Dendritic cell treated with granulocyte-macrophage colony-stimulating factor and Interleukin-4, amounts not matched to agents 40 ng/mL and 50 ng/mL, for 4 days (primary cell): ENCODE measurements at regions of chr6 and their contacts with region 1.

Region 1: GRCh38 chr6:16761471-16762267 is 409 bp upstream of the ATXN1 start:
- H3K4me3 Mint-ChIP-seq: peak overlapping the region; percentile 92
- H3K27ac Mint-ChIP-seq: peak overlapping the region; percentile 99
- H3K4me1 Mint-ChIP-seq: peaks cover 24% of the 10 kb centered on the region
- H3K27me3 Mint-ChIP-seq: no peaks in the 10 kb centered on the region

Region 2: DNA sequence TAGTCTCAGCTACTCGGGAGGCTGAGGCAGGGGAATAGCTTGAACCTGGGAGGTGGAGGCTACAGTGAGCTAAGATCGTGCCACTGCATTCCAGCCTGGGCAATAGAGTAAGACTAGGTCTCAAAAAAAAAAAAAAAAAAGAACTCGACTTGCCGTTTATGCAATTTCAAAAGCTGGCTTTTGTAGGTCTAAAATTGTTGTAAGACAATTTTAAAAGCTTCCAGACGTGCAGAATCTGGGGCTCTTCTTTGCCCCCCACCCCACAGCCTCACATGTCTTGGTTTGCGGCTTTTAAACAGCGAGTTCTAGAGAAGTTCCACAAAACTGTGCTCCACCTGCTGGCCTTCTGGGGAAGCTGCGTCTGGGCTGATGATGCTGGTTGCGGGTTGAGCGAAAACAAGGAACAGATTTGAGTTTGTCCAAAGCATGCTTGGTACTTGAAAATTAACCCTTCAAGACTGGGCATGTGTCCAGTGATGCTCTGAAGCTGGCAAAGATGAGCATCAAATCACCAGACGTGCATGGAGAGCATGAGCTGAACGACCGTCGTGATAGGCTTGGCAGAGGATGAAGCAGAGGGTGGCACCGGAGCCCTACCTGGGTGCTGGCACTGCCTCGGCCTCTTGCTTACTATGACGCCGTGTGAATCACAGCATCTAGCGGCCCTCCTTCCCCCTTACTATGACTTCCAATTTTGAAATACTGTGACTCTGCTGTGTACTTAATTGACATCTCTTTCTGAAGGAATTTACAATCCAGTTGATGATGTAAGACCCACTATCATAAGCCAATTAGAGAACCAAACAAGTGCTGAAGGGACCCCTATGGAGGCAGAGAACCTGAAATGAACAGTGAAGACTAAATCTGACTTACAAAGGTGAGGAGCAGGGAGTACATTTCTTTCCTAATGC is 351.9 kb before region 1 on chr6:
- intact Hi-C with region 1: loop called (anchors 5 kb)
- H3K4me3 Mint-ChIP-seq: no peak overlapping the region
- H3K27ac Mint-ChIP-seq: peak overlapping the region; percentile 41
- H3K4me1 Mint-ChIP-seq: peaks cover 62% of the 10 kb centered on the region
- H3K27me3 Mint-ChIP-seq: no peaks in the 10 kb centered on the region

Region 3: DNA sequence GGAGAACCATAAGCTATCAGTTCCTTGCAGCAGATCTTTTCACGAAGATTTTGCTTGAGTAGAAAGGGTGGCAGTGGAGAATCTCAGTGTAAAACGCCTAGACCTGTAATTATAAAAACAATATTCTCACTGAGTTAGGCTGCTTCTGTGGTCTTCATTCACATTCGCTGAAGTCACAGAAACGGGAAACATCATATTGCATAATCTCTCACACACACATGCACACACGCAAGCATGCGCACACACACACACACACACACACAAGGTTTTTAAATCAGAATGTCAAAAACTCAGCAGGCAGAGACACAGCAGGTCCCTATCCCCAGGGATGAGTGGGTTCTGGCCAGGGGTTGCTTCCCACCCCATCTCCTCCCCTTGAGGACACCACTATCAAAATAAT is 175.9 kb before region 1 on chr6:
- intact Hi-C with region 1: loop called (anchors 5 kb)
- H3K4me3 Mint-ChIP-seq: peak overlapping the region; percentile 62
- H3K27ac Mint-ChIP-seq: peak overlapping the region; percentile 71
- H3K4me1 Mint-ChIP-seq: peaks cover 41% of the 10 kb centered on the region
- H3K27me3 Mint-ChIP-seq: no peaks in the 10 kb centered on the region

Region 4: GRCh38 chr6:16824845-16825685 is 63.4 kb after region 1 on chr6:
- intact Hi-C with region 1: loop called (anchors 2 kb)
- H3K4me3 Mint-ChIP-seq: peak overlapping the region; percentile 32
- H3K27ac Mint-ChIP-seq: peak overlapping the region; percentile 99
- H3K4me1 Mint-ChIP-seq: peaks cover 58% of the 10 kb centered on the region
- H3K27me3 Mint-ChIP-seq: peaks cover 3% of the 10 kb centered on the region

Region 5: GRCh38 chr6:16849280-16849987 is 87.8 kb after region 1 on chr6:
- intact Hi-C with region 1: no loop called
- H3K4me3 Mint-ChIP-seq: no peak overlapping the region
- H3K27ac Mint-ChIP-seq: peak overlapping the region; percentile 94
- H3K4me1 Mint-ChIP-seq: peaks cover 62% of the 10 kb centered on the region
- H3K27me3 Mint-ChIP-seq: no peaks in the 10 kb centered on the region

Region 6: DNA sequence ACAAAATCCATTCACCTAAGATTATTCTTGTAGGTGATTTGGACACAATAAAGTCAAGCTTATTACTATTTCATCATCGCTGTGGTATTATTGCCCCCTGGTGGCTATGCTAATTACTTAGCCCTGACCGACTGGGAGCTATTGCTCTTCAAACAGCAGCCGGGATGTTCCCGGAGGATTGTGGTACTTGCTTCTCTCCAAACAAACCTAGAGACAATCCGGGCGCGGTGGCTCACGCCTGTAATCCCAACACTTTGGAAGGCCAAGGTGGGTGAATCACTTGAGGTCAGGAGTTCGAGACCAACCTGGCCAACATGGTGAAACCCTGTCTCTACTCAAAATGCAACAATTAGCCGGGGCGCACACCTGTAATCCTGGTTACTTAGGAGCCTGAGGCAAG is 324.8 kb after region 1 on chr6:
- intact Hi-C with region 1: loop called (anchors 2 kb)
- H3K4me3 Mint-ChIP-seq: no peak overlapping the region
- H3K27ac Mint-ChIP-seq: no peak overlapping the region
- H3K4me1 Mint-ChIP-seq: no peaks in the 10 kb centered on the region
- H3K27me3 Mint-ChIP-seq: peaks cover 19% of the 10 kb centered on the region